Activated CD8-positive, alpha-beta T cell treated with anti-CD3 and anti-CD28 coated beads for 36 hours (primary cell): ENCODE measurements at regions of chr1 and their contacts with region 1.

Region 1: DNA sequence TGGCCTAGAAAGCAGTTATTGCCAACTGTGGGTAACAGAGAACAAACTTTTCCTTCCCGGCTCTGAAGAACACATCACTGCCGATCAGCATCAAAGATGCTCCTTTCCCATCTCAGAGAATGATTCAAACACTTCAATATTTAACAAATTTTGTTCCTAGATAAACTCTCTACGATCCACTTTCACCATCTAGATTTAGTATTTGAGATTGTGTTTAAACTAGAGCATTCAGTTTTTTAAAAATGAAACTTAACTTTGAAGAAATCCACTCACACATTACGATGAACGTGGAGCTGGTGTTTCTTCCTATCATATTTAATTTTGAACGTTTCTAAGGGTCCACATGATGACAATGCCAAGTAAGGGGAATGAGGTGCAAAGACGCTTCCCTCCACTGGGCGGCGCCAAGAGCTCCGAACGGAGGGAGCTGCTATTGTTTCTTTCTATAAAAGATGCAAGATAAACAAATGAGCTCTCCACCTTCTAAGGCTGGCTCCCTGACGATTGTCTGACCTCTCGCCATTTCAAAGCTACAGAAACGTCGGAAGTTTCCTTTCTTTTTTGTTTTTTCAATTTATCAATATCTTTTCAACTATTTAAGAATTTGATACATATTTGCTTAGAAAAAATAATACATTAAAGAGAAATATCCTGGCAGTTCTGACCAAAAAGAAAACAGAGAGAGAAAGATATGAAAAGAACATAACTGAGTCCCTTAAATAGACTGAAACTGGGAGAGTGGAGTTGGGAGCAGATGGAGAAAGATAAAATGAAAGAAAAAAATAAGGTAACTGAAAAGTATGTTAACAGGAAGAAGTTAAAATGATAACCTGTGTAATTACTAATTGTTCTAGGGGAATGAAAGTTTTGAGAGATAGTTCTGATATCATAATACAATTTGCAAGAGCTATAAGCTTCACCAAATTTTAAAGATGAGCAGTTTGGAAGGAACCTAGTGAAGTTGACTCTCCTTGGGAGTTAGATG is 4.4 kb upstream of the BARHL2 start:
- DNase-seq: peak; percentile 68
- ATAC-seq: peak; percentile 52
- H3K4me3 Mint-ChIP-seq: no peak overlapping the region
- H3K27ac Mint-ChIP-seq: no peak overlapping the region
- H3K4me1 Mint-ChIP-seq: peaks cover 47% of the 10 kb centered on the region
- H3K27me3 Mint-ChIP-seq: peaks cover 86% of the 10 kb centered on the region
- CTCF ChIP-seq: peak; percentile 86

Region 2: GRCh38 chr1:90707363-90707710 is 14.2 kb before region 1 on chr1:
- CTCF ChIA-PET with region 1: interaction called, 12 read pairs
- POLR2A ChIA-PET with region 1: interaction called, 5 read pairs
- intact Hi-C with region 1: no loop called
- DNase-seq: peak; percentile 34
- ATAC-seq: no peak
- H3K4me3 Mint-ChIP-seq: peak overlapping the region; percentile 6
- H3K27ac Mint-ChIP-seq: no peak overlapping the region
- H3K4me1 Mint-ChIP-seq: peaks cover 7% of the 10 kb centered on the region
- H3K27me3 Mint-ChIP-seq: peaks cover 75% of the 10 kb centered on the region
- CTCF ChIP-seq: no peak

Region 3: DNA sequence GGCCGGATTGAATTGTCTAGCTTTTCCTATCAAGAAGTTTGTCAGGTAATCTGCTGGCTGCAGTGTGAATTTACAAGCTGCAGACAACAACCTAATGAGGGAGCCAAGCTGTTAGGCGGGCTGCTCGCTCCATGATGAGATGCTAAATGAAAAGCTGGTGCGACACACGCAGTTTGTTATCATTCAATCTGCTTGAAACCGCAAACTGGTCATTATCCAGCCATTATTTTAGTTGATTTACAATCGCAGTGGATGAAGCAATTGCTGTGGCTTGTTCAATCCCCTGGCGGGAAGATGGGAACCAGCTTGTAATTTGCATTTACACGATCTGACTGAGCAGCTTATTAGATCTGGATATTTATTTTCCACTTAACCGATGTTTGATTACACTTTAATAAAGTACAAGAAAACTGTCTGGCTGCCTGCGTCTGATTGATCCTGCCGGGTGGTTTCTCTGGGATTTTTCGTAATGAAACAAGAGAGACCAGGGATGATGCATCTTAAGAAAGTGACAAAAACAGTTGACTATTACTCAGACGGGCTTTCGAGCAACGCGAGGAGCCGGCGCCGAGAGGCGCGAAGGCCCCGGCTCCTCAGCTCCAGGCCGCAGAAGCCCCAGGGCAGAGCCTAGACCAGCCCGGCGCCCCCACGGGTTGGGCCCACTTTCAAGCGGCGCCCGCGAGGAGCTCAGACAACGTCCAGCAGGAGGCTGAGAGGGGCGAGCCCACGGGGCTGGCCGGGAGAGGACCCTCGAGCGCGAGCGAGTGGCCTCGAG is 113.6 kb after region 1 on chr1:
- CTCF ChIA-PET with region 1: interaction called, 15 read pairs
- POLR2A ChIA-PET with region 1: no interaction called
- intact Hi-C with region 1: loop called (anchors 5 kb)
- DNase-seq: peak; percentile 24
- ATAC-seq: peak; percentile 47
- H3K4me3 Mint-ChIP-seq: no peak overlapping the region
- H3K27ac Mint-ChIP-seq: no peak overlapping the region
- H3K4me1 Mint-ChIP-seq: peaks cover 17% of the 10 kb centered on the region
- H3K27me3 Mint-ChIP-seq: peaks cover 80% of the 10 kb centered on the region
- CTCF ChIP-seq: no peak